Activated CD4-positive, alpha-beta T cell treated with anti-CD3 and anti-CD28 coated beads, Interleukin-2, amount 10 ng/mL, durations not matched to agents 24 days and 14 days (primary cell): ENCODE measurements at regions of chr9 and their contacts with region 1.

Region 1: DNA sequence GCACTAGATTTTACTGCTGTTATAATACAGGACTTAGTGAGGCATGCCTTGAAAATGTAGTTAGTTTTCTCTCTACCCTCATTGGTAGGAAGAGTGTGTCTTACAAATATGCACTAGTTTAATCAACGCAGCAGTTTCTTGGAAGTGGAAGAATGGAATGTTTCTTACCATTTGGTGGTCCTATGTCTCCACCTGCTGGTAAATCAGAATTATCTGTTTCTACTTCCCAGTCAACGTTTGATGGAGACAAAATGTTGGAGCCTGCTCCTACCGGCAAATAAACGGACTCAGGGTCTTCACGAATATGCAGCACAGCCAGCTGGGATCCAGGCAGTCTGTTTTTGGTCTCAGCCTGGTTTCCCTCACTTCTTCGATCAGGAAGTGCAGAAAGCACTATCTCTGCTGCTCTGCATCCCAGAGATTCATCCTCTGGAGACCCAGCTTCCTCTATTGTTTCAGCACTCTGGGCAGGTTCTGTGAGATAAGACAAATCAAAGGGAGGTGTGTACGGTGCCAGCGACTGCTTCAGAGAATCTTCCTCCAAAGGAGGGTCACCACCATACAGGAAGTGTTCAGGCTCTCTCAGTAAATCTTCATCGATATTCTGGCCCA is 59.5 kb upstream of the PCA3 start:
- DNase-seq: peak; percentile 71
- H3K4me3 Mint-ChIP-seq: no peak overlapping the region
- H3K27ac Mint-ChIP-seq: no peak overlapping the region
- H3K4me1 Mint-ChIP-seq: peaks cover 5% of the 10 kb centered on the region
- H3K27me3 Mint-ChIP-seq: peaks cover 32% of the 10 kb centered on the region

Region 2: DNA sequence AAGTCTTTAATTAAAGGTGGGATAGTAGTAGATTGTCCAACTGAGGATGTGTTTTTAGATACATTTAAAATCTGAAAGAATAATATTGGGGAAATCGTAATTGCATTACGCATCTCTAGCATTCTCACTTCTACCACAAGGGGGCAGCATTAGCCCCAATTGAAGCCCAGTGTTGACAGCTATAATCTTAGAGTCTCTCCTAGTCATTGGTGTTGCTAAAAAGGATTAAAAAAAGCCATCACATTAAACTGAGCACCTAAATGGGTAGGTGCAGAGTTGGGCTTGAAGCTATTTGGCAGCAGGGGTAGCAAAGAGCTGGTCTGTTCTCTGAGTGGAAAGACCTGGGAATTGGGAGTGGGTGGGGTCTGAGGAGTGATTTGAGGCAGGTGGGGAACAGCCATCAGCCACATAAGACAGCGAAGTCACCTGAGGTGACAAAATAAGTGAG is 1439.2 kb before region 1 on chr9:
- intact Hi-C with region 1: loop called (anchors 10 kb)
- DNase-seq: peak; percentile 83
- H3K4me3 Mint-ChIP-seq: no peak overlapping the region
- H3K27ac Mint-ChIP-seq: no peak overlapping the region
- H3K4me1 Mint-ChIP-seq: peaks cover 2% of the 10 kb centered on the region
- H3K27me3 Mint-ChIP-seq: no peaks in the 10 kb centered on the region

Region 3: GRCh38 chr9:75993434-75993833 is 711.3 kb before region 1 on chr9:
- intact Hi-C with region 1: no loop called
- DNase-seq: no peak
- H3K4me3 Mint-ChIP-seq: no peak overlapping the region
- H3K27ac Mint-ChIP-seq: no peak overlapping the region
- H3K4me1 Mint-ChIP-seq: peaks cover 4% of the 10 kb centered on the region
- H3K27me3 Mint-ChIP-seq: no peaks in the 10 kb centered on the region

Region 4: GRCh38 chr9:76451234-76451633 is 253.5 kb before region 1 on chr9:
- intact Hi-C with region 1: loop called (anchors 1 kb)
- DNase-seq: no peak
- H3K4me3 Mint-ChIP-seq: no peak overlapping the region
- H3K27ac Mint-ChIP-seq: no peak overlapping the region
- H3K4me1 Mint-ChIP-seq: peaks cover 18% of the 10 kb centered on the region
- H3K27me3 Mint-ChIP-seq: no peaks in the 10 kb centered on the region

Region 5: GRCh38 chr9:76619640-76620039 is 85.1 kb before region 1 on chr9:
- intact Hi-C with region 1: no loop called
- DNase-seq: no peak
- H3K4me3 Mint-ChIP-seq: no peak overlapping the region
- H3K27ac Mint-ChIP-seq: no peak overlapping the region
- H3K4me1 Mint-ChIP-seq: peaks cover 16% of the 10 kb centered on the region
- H3K27me3 Mint-ChIP-seq: peaks cover 41% of the 10 kb centered on the region

Region 6: GRCh38 chr9:76634356-76635022 is 70.2 kb before region 1 on chr9:
- intact Hi-C with region 1: no loop called
- DNase-seq: no peak
- H3K4me3 Mint-ChIP-seq: no peak overlapping the region
- H3K27ac Mint-ChIP-seq: no peak overlapping the region
- H3K4me1 Mint-ChIP-seq: peaks cover 8% of the 10 kb centered on the region
- H3K27me3 Mint-ChIP-seq: no peaks in the 10 kb centered on the region

Region 7: DNA sequence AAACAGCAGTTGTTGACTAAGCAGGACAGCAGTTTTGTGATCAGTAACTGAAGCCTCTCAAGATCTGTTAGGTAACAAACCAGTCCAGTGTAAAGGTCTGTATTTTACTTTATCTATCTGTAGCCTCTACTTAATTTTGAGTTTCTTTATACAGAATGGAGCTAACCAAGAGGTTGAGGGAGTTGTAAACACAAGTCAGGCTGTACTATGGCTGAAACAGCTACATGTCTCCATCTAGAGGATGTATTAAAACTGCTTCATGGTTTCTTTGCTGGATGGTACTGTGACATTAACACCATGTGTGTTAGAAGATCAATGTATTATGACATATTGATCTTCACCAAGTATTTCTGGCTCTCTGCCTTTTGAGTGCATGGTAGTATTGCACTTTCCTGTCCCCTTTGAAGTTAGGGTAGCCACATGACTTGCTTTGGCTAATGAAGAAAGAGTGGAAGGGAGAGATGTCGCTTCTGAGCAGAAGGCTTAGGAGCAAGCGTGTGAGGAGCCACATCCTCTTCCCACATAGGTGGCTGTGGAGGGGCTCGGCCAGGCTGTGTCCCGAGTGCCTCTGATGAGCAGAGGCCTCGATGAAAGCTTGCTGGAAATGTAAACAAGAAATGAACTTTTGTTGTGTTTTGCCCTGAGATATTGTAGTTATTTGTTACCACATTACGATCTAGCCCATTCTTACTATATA is 46.0 kb before region 1 on chr9:
- intact Hi-C with region 1: loop called (anchors 2 kb)
- DNase-seq: peak; percentile 73
- H3K4me3 Mint-ChIP-seq: no peak overlapping the region
- H3K27ac Mint-ChIP-seq: no peak overlapping the region
- H3K4me1 Mint-ChIP-seq: peaks cover 27% of the 10 kb centered on the region
- H3K27me3 Mint-ChIP-seq: peaks cover 8% of the 10 kb centered on the region

Region 8: GRCh38 chr9:76773036-76773435 is 68.3 kb after region 1 on chr9:
- intact Hi-C with region 1: no loop called
- DNase-seq: no peak
- H3K4me3 Mint-ChIP-seq: no peak overlapping the region
- H3K27ac Mint-ChIP-seq: no peak overlapping the region
- H3K4me1 Mint-ChIP-seq: peaks cover 3% of the 10 kb centered on the region
- H3K27me3 Mint-ChIP-seq: peaks cover 5% of the 10 kb centered on the region